ENCODE measurements at regions of chr12 and their contacts with region 1.

Region 1: GRCh38 chr12:68807576-68808387 is at the start of gene MDM2:
- DNase-seq: peak; percentile 88
- H3K4me3 ChIP-seq: peak within 1 kb of the TSS; percentile 57 to 82 (median 68)
- H3K27ac ChIP-seq: peak within 1 kb of the TSS; percentile 82
- H3K4me1 ChIP-seq: peaks cover 3% of the 10 kb centered on the region
- H3K27me3 ChIP-seq: no peaks in the 10 kb centered on the region
- CTCF ChIP-seq: peak; percentile 83 to 87
- POLR2A ChIP-seq: peak; percentile 73
- total RNA-seq, gene MDM2: 270 and 276 TPM in 2 replicates

Region 2: DNA sequence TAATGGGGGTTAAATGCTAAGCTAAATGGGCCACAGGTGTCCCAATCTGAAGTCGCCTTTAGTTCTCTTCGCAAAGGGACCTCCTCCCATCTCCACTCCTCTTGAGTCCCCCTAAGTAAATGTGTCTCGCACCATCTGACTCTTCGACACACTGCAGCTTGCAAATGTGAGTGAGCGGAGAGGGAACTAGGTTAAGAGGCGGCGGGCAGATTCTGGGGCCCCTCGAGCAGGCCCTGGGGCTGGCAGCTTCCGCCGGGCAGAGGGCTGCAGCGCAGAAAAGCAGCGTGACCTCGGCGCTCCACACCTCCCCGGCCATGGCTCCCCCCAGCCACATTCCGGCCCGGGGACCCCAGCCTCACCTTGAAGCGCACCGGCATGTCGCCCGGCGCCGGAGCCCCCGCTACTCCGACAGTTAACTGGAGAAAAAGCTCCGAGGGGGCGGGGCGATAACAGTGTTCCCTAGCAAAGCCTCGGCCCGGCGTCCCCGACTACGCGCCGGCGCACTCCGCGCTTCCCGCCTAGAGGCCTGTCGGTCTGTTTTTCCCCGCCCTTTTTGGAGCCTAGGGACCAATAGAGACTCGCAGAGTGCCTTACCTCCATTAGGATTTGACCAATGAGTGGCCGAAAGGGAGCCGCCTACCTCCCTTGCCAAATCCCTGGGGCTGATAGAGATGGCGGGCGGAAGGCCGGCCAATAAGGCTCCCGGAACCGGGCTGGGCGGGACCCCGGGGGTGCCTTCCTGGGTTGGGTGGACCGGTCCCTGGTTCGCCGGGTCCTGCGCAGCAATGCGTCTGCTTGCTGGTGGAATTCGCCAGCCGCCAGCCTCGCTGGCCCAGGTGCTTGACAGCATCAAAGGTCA is 475.7 kb before region 1 on chr12 and contains the start of gene MDM1:
- CTCF ChIA-PET with region 1: no interaction called
- POLR2A ChIA-PET with region 1: no interaction called
- dilution Hi-C with region 1: no loop called
- intact Hi-C with region 1: loop called (anchors 1 kb)
- DNase-seq: peak; percentile 98
- H3K4me3 ChIP-seq: peak within 1 kb of the TSS; percentile 57 to 93 (median 87)
- H3K27ac ChIP-seq: peak within 1 kb of the TSS; percentile 19
- H3K4me1 ChIP-seq: peaks cover 13% of the 10 kb centered on the region
- H3K27me3 ChIP-seq: peaks cover 4 to 21% of the 10 kb centered on the region in 2 experiments
- CTCF ChIP-seq: no peak
- POLR2A ChIP-seq: peak; percentile 79
- total RNA-seq, gene MDM1: 12.5 and 14.4 TPM in 2 replicates

Region 3: GRCh38 chr12:68521321-68521839 is 286.4 kb before region 1 on chr12:
- CTCF ChIA-PET with region 1: no interaction called
- POLR2A ChIA-PET with region 1: no interaction called
- dilution Hi-C with region 1: no loop called
- intact Hi-C with region 1: loop called (anchors 5 kb)
- DNase-seq: peak; percentile 92
- H3K4me3 ChIP-seq: peak overlapping the region in 2 of 3 experiments; percentile 9 to 51
- H3K27ac ChIP-seq: peak overlapping the region; percentile 95
- H3K4me1 ChIP-seq: peaks cover 17% of the 10 kb centered on the region
- H3K27me3 ChIP-seq: no peaks in the 10 kb centered on the region
- CTCF ChIP-seq: no peak
- POLR2A ChIP-seq: no peak

Region 4: GRCh38 chr12:68745904-68746571 is 61.7 kb before region 1 on chr12 and contains the start of gene SLC35E3:
- CTCF ChIA-PET with region 1: interaction called, 15 read pairs
- POLR2A ChIA-PET with region 1: interaction called, 6 read pairs
- dilution Hi-C with region 1: no loop called
- intact Hi-C with region 1: loop called (anchors 1 kb)
- DNase-seq: peak; percentile 85
- H3K4me3 ChIP-seq: peak within 1 kb of the TSS; percentile 7 to 87 (median 64)
- H3K27ac ChIP-seq: peak within 1 kb of the TSS; percentile 25
- H3K4me1 ChIP-seq: peaks cover 16% of the 10 kb centered on the region
- H3K27me3 ChIP-seq: no peaks in the 10 kb centered on the region
- CTCF ChIP-seq: no peak
- POLR2A ChIP-seq: peak; percentile 79
- total RNA-seq, gene SLC35E3: 9.9 and 13.8 TPM in 2 replicates

Region 5: DNA sequence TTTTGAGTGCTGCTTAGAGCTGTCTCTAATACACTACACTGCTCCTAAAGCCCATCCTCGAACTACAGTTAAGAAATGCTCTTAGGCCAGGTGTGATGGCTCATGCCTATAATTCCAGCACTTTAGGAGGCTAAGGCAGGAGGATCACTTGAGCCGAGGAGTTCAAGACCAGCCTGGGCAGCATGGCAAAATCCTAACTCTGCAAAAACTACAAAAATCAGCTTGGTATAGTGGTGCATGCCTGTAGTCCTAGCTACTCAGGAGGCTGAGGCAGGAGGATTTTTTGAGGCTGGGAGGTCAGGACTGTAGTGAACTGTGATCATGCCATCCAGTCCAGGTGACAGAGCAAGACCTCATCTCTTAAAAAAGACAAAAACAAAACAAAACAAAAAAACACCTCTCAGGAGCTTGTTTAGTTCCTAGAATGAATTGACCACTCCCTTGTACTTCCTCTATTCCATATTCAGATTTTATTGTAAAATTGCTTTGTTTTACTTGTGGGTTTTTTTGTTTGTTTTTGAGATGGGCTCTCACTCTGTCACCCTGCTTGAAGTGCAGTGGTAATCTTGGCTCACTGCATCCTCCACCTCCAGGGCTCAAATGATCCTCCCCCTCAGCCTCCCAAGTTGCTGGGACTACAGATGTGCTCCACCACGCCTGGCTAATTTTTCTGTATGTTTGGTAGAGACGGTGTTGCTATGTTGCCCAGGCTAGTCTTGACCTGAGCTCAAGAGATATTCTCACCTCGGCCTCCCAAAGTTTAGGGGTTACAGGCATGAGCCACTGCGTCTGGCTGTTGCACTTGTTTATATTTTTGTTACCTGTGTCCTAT is 13.8 kb after region 1 on chr12:
- CTCF ChIA-PET with region 1: interaction called, 4 read pairs
- POLR2A ChIA-PET with region 1: interaction called, 5 read pairs
- dilution Hi-C with region 1: no loop called
- intact Hi-C with region 1: loop called (anchors 2 kb)
- DNase-seq: no peak
- H3K4me3 ChIP-seq: no peak overlapping the region
- H3K27ac ChIP-seq: no peak overlapping the region
- H3K4me1 ChIP-seq: peaks cover 8% of the 10 kb centered on the region
- H3K27me3 ChIP-seq: no peaks in the 10 kb centered on the region
- CTCF ChIP-seq: no peak
- POLR2A ChIP-seq: peak; percentile 31

Region 6: GRCh38 chr12:68971351-68971772 is 163.6 kb after region 1 on chr12:
- CTCF ChIA-PET with region 1: no interaction called
- POLR2A ChIA-PET with region 1: no interaction called
- dilution Hi-C with region 1: no loop called
- intact Hi-C with region 1: no loop called
- DNase-seq: no peak
- H3K4me3 ChIP-seq: no peak overlapping the region
- H3K27ac ChIP-seq: no peak overlapping the region
- H3K4me1 ChIP-seq: no peaks in the 10 kb centered on the region
- H3K27me3 ChIP-seq: peaks cover 0 to 3% of the 10 kb centered on the region in 2 experiments
- CTCF ChIP-seq: no peak
- POLR2A ChIP-seq: no peak

Measured in endothelial cell of umbilical vein (primary cell).